Activated T-helper 2 cell treated with anti-CD3 and anti-CD28 coated beads, Interferon-gamma antibody, Interleukin-2, Interleukin-4, amounts not matched to agents 10 μg/mL and 5 μg/mL and 100 μg/mL, durations not matched to agents 14 hours and 24 hours and 36 hours (primary cell): ENCODE measurements at regions of chr10 and their contacts with region 1.

Region 1: GRCh38 chr10:26334932-26335573 is 103.1 kb upstream of the APBB1IP start:
- DNase-seq: peak; percentile 51
- H3K4me3 Mint-ChIP-seq: peak overlapping the region; percentile 71
- H3K27ac Mint-ChIP-seq: peak overlapping the region; percentile 64
- H3K4me1 Mint-ChIP-seq: peaks cover 7% of the 10 kb centered on the region
- H3K27me3 Mint-ChIP-seq: peaks cover 6% of the 10 kb centered on the region

Region 2: DNA sequence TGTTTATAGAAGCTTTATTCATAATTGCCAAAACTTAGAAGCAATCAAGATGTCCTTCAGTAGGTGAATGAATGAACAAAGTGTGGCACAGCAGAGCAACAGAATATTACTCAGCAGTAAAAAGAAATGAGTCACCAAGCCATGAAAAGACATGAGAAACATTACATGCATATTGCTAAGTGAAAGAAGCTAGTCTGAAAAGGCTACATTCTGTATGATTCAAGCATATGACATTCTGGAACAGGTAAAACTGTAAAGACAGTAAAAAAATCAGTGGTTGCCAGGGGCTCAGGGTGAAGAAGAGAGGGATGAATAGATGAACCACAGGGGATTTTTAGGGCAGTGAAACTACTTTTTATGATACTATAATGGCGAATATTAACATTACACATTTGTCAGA is 22.1 kb after region 1 on chr10:
- intact Hi-C with region 1: no loop called
- DNase-seq: no peak
- H3K4me3 Mint-ChIP-seq: no peak overlapping the region
- H3K27ac Mint-ChIP-seq: no peak overlapping the region
- H3K4me1 Mint-ChIP-seq: peaks cover 2% of the 10 kb centered on the region
- H3K27me3 Mint-ChIP-seq: peaks cover 41% of the 10 kb centered on the region

Region 3: DNA sequence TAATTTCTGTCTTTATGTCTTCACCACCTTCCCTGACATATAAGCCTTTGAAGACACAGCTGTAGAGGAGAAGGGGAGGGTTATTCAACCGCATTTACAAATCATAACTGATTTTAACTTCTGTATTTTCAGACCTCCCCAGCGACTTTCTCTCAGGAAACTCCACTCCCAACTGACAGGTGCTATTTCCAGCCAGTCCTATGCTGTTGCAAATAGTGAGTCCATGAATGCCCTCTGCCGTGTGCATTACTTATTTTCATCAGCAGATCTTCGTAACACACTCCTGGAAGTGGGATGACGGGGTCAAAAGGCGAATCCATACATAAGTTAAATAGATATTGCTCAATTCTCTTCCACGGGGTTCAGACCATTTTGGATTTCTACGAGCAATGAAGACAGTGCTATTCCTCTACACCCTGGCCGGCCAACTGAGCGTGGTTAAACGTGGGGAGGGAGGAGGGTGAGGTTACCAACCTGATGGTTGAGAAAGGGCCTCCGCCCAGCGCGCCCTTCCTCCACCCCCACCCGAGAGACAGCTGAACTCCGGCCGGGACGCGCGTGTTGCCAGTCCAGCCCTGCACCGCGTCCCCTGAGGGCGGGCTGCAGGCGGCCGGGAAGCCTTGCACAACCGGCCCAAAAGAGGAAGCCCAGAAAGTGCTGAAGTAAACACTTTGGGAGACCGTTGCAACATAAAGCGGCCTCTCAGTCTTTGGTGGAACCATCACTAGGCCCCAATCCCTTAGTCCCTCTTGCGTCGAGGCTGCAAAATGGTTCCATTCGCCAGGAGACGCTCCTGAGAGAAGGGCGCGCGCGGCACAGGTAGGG is 102.8 kb after region 1 on chr10 and contains the start of gene APBB1IP:
- intact Hi-C with region 1: loop called (anchors 5 kb)
- DNase-seq: peak; percentile 52
- H3K4me3 Mint-ChIP-seq: peak within 1 kb of the TSS; percentile 92
- H3K27ac Mint-ChIP-seq: peak within 1 kb of the TSS; percentile 90
- H3K4me1 Mint-ChIP-seq: peaks cover 39% of the 10 kb centered on the region
- H3K27me3 Mint-ChIP-seq: no peaks in the 10 kb centered on the region
- total RNA-seq, gene APBB1IP: 45.2 and 47.4 TPM in 2 replicates

Region 4: DNA sequence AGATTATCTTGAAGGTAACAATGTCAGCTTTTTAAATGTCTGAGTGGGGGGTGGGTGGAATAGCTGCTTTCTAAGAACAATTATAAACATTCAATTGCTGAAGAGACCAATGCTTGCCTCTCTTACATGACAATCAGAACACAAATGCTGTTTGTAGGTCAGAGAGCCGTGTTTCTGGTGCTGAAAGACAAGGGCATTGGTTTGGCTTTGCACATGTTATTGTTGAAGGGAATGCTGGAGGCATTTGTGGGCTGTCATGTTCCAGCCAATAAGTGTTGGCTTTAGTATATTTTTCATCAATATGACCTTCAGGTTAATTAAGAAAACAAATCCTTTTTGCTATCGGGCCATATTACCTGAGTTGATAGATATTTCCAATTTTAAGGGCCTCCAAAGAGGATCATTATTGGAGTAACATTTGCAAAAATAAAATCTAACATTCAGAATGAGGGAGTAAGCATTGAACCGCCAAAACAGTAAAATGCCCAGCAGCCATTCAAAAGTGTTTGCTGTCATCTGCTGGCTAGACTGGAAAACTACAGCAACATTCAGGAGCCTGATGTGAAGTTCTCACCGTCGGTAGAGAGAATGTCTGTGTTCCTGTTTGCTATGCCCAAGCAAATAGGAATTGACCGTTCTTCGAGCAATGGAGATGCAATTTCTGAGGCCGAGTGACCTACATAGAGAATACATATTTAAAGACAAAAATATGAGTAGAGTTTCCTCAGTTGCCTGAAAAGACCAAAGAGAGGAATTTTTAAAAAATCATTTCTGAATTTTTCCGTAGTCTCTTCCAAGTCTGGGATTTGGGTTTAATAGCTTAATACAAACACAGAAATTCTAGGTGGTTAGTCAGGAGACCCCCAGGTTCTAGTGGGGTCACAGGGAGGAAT is 221.9 kb after region 1 on chr10:
- intact Hi-C with region 1: loop called (anchors 1 kb)
- DNase-seq: peak; percentile 22
- H3K4me3 Mint-ChIP-seq: no peak overlapping the region
- H3K27ac Mint-ChIP-seq: no peak overlapping the region
- H3K4me1 Mint-ChIP-seq: no peaks in the 10 kb centered on the region
- H3K27me3 Mint-ChIP-seq: no peaks in the 10 kb centered on the region